G401 (cell line): ENCODE measurements at regions of chr20 and their contacts with region 1.

Region 1: GRCh38 chr20:49186535-49187329 is 1.4 kb downstream of the STAU1 start:
- DNase-seq: peak; percentile 41

Region 2: DNA sequence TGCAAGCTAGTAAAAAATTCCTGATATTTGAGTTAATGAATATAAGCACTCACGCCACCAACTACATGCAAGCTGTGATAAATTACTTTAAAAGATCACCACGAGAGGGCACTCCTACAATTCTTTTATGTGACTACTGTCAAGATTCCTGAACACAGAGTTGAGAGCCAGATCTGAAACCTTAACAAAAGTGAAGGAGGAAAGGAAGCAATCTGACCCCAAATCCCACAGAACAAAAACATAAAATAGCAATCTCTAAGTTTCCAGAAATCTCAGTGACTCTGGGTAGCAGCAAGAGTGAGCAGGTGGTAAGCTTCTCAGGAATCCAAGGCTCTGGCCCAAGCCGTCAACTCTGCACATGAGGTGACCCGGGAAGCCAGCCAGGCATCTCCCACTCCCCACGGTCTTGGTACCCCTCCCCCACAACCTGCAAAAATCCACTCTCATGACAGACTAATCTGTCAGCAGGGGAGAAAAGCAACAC is 53.7 kb before region 1 on chr20:
- in situ Hi-C with region 1: loop called (anchors 10 kb)
- DNase-seq: peak; percentile 85